Heart left ventricle (tissue), 16 donors: ENCODE measurements at regions of chr16 and their contacts with region 1.

Region 1: DNA sequence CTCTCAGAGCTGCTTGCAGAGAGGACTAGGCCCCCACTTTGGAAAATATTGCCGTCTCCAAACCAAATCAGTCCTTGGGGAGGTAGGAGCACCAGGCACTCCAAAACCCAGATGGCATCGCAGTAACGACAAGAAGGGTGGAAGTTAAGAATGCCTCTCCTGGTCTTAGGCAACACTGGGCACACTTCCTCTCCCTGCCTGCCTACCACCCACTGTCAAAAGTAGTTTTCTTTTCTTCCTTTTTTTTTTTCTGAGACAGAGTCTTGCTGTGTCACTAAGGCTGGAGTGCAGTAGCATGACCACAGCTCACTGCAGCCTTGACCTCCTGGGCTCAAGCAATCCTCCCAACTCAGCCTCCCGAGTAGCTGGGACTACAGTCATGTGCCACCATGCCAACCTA is 47.2 kb downstream of the SRL start:
- DNase-seq: peak in 2 of 5 donors; percentile 11 to 13
- ATAC-seq: peak in 3 of 4 donors; percentile 5 to 35 (median 35)
- H3K4me3 ChIP-seq: no peak overlapping the region
- H3K27ac ChIP-seq: peak overlapping the region in 2 of 12 donors; percentile 29 to 32
- H3K4me1 ChIP-seq: peaks cover 0 to 21% (median 7%) of the 10 kb centered on the region in 12 donors
- H3K27me3 ChIP-seq: no peaks in the 10 kb centered on the region
- CTCF ChIP-seq: no peak
- POLR2A ChIP-seq: no peak

Region 2: DNA sequence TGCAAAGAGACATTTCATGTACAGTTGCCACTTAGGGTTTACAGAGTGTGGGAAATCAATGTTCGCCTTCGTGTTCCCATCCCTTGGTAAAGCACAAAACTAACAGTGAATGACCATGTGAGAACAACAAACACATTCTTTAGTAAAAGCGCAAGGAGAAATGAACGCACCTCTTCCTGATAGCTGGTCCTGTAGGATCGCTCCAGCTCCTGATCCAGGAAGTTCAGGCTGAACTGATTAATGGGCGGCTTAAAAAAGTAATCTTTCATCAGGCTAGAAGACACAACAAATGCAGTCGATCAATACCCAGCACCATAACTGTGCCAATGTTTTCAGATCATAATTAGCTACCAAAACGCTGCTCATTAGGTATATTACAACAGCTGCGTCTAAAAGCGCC is 205.8 kb before region 1 on chr16:
- intact Hi-C with region 1: loop called in 6 of 10 experiments (anchors 5 to 10 kb)
- DNase-seq: no peak
- ATAC-seq: no peak
- H3K4me3 ChIP-seq: no peak overlapping the region
- H3K27ac ChIP-seq: no peak overlapping the region
- H3K4me1 ChIP-seq: no peaks in the 10 kb centered on the region
- H3K27me3 ChIP-seq: no peaks in the 10 kb centered on the region
- CTCF ChIP-seq: no peak
- POLR2A ChIP-seq: no peak

Region 3: GRCh38 chr16:4261557-4262172 is 67.0 kb after region 1 on chr16:
- intact Hi-C with region 1: loop called in 1 of 10 experiments (anchors 5 kb)
- DNase-seq: peak in 1 of 5 donors; percentile 60
- ATAC-seq: no peak
- H3K4me3 ChIP-seq: no peak overlapping the region
- H3K27ac ChIP-seq: no peak overlapping the region
- H3K4me1 ChIP-seq: peaks cover 0 to 30% (median 11%) of the 10 kb centered on the region in 12 donors
- H3K27me3 ChIP-seq: no peaks in the 10 kb centered on the region
- CTCF ChIP-seq: peak; percentile 47 to 78 (median 58)
- POLR2A ChIP-seq: no peak

Region 4: DNA sequence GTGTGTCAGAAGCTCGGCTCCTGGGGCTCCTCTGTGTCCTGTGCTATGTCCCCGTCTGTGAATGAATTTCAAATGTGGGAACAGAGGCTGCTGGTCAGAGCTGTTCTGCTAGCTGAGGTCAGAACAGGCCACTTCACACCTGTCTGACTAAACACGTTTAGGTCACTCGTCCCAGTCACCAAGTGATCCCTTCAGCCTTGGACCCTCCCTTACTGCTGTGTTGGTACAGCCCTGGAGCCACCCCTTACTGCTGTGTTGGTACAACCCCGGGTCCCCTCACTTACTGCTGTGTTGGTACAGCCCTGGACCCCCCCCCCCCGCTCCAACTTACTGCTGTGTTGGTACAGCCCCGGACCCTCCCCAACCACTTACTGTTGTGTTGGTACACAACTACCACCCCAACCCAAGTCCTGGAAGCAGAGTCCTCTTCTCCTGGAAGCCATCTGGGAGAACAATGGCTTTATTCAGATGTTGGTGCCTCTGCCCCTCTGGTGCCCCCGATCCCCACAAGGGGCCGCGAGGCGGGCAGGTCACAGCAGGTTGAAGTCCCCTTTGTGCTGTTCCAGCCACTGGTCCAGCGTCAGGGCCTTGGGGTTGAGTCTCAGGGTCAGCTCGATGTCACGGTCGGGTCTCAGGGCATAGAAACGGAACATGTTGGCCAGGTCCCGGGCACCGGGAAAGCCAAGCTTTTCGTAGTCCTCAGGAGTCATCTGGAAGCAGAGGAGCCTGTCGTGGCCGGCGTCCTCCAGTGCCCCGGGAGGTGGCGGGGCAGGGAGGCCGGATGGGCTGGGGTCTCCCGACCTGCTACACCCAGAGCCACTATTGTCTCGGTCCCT is 266.8 kb after region 1 on chr16:
- intact Hi-C with region 1: no loop called
- DNase-seq: no peak
- ATAC-seq: no peak
- H3K4me3 ChIP-seq: no peak overlapping the region
- H3K27ac ChIP-seq: no peak overlapping the region
- H3K4me1 ChIP-seq: peaks cover 0 to 21% (median 1%) of the 10 kb centered on the region in 12 donors
- H3K27me3 ChIP-seq: no peaks in the 10 kb centered on the region
- CTCF ChIP-seq: no peak
- POLR2A ChIP-seq: no peak

Region 5: GRCh38 chr16:4763791-4764190 is 569.1 kb after region 1 on chr16:
- intact Hi-C with region 1: no loop called
- DNase-seq: no peak
- ATAC-seq: no peak
- H3K4me3 ChIP-seq: no peak overlapping the region
- H3K27ac ChIP-seq: no peak overlapping the region
- H3K4me1 ChIP-seq: peaks cover 9 to 33% (median 28%) of the 10 kb centered on the region in 12 donors
- H3K27me3 ChIP-seq: no peaks in the 10 kb centered on the region
- CTCF ChIP-seq: no peak
- POLR2A ChIP-seq: no peak